Activated CD4-positive, alpha-beta memory T cell treated with anti-CD3 and anti-CD28 coated beads, Interleukin-2, amount 10 ng/mL, durations not matched to agents 7 days and 5 days (primary cell): ENCODE measurements at regions of chr16 and their contacts with region 1.

Region 1: DNA sequence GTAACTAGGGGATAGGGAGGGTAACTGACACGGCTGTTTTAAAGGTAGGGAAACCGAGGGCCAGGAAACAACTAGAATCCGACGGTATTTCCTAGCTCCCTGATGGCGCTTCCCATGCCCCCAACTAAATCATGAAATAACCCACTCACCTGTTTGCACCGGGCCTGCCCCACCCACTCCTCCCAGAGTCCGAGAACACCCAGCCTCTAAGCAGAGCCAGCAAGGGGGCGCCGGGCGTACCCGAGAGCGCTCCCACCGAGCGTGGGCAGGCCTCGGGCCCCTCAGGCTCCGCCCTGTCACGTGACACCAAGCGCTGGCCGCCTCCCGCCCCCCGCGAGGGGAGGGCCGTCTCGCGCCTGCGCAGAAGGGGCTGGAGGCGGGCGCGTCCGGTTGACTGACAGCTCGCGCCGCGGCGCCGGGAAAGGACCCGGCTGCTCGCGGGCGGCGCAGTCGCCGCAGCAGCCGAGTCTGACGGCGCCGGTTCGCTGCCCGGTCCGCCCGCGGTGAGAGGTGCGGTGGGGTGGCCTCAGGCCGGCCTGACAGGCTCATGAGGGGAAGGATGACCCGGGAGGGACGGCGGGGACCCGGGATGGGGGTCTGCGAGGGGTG is at the start of gene KIAA0513:
- DNase-seq: peak; percentile 96
- H3K4me3 Mint-ChIP-seq: peak within 1 kb of the TSS; percentile 85
- H3K27ac Mint-ChIP-seq: peak within 1 kb of the TSS; percentile 85
- H3K4me1 Mint-ChIP-seq: peaks cover 40% of the 10 kb centered on the region
- H3K27me3 Mint-ChIP-seq: peaks cover 2% of the 10 kb centered on the region
- total RNA-seq, gene KIAA0513: 7.4 to 7.9 TPM

Region 2: GRCh38 chr16:85010931-85011845 is 16.3 kb before region 1 on chr16 and contains the start of gene ZDHHC7:
- CTCF ChIA-PET with region 1: interaction called, 14 read pairs
- POLR2A ChIA-PET with region 1: interaction called, 56 read pairs
- DNase-seq: peak; percentile 87
- H3K4me3 Mint-ChIP-seq: peak within 1 kb of the TSS; percentile 98
- H3K27ac Mint-ChIP-seq: peak within 1 kb of the TSS; percentile 94
- H3K4me1 Mint-ChIP-seq: peaks cover 38% of the 10 kb centered on the region
- H3K27me3 Mint-ChIP-seq: peaks cover 2% of the 10 kb centered on the region
- total RNA-seq, gene ZDHHC7: 24.6 to 25.1 TPM

Region 3: DNA sequence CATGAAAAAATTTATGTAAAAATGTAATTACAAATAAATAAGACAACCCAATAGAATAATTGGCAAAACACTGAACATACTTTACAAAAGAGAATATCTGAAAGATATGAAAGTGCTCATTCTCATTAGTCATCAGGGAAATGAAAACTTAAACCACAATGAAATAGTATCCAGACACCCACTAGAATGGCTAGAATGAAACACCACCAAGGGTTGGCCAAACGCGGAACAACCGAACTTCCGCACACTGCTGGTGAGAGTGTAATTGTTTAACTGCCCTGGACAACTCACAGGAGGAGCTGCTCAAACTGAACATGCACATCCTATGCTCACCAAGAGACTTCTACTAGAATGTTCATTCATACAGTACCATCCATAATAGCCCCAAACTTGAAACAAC is 10.3 kb before region 1 on chr16:
- CTCF ChIA-PET with region 1: interaction called, 14 read pairs
- POLR2A ChIA-PET with region 1: interaction called, 56 read pairs
- DNase-seq: peak; percentile 29
- H3K4me3 Mint-ChIP-seq: no peak overlapping the region
- H3K27ac Mint-ChIP-seq: no peak overlapping the region
- H3K4me1 Mint-ChIP-seq: peaks cover 15% of the 10 kb centered on the region
- H3K27me3 Mint-ChIP-seq: peaks cover 15% of the 10 kb centered on the region

Region 4: DNA sequence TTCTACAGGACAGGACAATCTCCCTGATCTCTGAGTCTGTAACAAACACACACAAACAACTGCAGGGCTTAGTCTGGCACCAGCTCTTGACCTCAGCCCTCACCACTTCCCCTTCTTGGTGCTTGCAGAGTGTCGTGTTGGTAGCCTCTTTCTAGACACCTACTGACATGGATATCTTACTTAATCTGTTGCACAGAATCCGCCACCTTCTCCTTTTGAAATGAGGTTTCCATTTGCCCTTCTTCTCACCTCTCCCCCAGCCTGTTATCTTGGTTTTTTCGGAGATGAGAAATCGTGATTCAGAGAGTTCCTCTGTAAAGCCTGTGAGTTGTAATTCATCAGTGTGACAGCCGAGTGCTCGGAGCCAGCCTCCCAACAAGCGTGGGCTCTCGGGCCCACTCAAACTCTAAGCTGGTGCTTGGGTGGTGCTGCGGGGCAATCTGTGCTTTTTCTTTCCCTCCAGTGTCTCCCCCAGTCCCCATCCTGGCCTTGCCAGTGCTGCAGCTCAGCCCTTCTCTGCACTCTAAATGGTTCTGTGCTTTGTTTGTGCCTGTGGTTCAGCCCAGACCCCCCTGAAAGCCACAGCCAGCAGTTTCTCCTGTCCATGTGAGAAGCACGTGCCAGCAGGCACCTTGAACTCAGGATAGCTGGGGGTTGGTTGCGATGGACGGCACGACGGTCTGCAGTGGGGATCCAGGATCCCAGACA is 28.2 kb after region 1 on chr16:
- CTCF ChIA-PET with region 1: no interaction called
- POLR2A ChIA-PET with region 1: interaction called, 21 read pairs
- DNase-seq: peak; percentile 92
- H3K4me3 Mint-ChIP-seq: peak overlapping the region; percentile 21
- H3K27ac Mint-ChIP-seq: peak overlapping the region; percentile 66
- H3K4me1 Mint-ChIP-seq: peaks cover 32% of the 10 kb centered on the region
- H3K27me3 Mint-ChIP-seq: peaks cover 12% of the 10 kb centered on the region

Region 5: GRCh38 chr16:85086347-85087291 is 59.2 kb after region 1 on chr16:
- CTCF ChIA-PET with region 1: interaction called, 13 read pairs
- POLR2A ChIA-PET with region 1: interaction called, 6 read pairs
- DNase-seq: peak; percentile 78
- H3K4me3 Mint-ChIP-seq: no peak overlapping the region
- H3K27ac Mint-ChIP-seq: no peak overlapping the region
- H3K4me1 Mint-ChIP-seq: no peaks in the 10 kb centered on the region
- H3K27me3 Mint-ChIP-seq: no peaks in the 10 kb centered on the region

Region 6: DNA sequence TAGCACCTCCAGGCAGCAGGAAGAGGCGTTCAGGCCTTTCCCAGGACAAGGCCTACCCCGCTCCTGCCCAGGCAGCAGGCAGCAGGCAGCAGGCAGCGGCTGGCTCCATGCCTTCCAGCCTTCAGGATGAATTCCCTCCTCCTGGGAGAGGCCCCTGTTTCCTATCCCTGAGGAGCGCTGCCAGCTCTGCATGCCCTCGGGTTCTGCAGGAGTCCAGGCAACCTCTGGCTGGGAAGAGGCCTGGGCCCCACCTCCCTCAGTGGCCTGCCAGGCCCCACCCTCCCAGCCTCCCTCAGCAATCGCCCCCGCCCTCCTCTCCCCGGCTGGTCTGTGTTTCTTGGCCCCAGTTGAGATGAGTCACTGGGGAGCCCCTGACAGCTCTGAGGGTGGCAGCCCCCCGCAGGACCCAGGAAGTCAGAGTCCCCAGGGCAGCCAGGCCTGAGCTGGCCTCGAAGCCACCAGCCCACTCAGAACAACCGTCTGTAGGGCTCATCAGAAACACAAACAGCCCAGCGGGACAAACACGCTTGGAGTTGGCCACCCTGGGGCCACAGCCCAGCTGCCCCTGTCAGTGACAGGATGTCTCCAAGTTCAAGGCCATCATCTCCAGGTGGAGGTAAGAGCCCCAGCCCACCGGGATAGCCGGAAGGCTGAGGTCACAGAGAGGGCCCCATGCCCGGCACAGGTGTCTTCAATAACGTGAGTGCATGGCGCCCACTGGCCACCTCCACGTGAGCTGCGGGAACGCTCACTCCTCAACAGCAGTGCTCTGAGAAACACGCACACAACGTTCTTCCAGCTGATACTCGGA is 124.4 kb after region 1 on chr16:
- CTCF ChIA-PET with region 1: no interaction called
- POLR2A ChIA-PET with region 1: no interaction called
- DNase-seq: no peak
- H3K4me3 Mint-ChIP-seq: no peak overlapping the region
- H3K27ac Mint-ChIP-seq: no peak overlapping the region
- H3K4me1 Mint-ChIP-seq: no peaks in the 10 kb centered on the region
- H3K27me3 Mint-ChIP-seq: peaks cover 2% of the 10 kb centered on the region